CD14-positive monocyte (primary cell): ENCODE measurements at regions of chr6 and their contacts with region 1.

Region 1: GRCh38 chr6:127120787-127121636 is 2.5 kb downstream of the RSPO3 start:
- DNase-seq: peak; percentile 58 to 77 (median 64)
- H3K4me3 ChIP-seq: no peak overlapping the region
- H3K4me3 Mint-ChIP-seq: peak overlapping the region in 1 of 2 donors; percentile 80
- H3K27ac ChIP-seq: no peak overlapping the region
- H3K27ac Mint-ChIP-seq: peak overlapping the region in 2 of 7 donors; percentile 55 to 68
- H3K4me1 ChIP-seq: peaks cover 23% of the 10 kb centered on the region in 2 donors
- H3K4me1 Mint-ChIP-seq: peaks cover 26% of the 10 kb centered on the region
- H3K27me3 ChIP-seq: peaks cover 63 to 84% of the 10 kb centered on the region in 2 donors
- H3K27me3 Mint-ChIP-seq: peaks cover 63 to 79% (median 71%) of the 10 kb centered on the region in 3 donors
- CTCF ChIP-seq: peak; percentile 77

Region 2: DNA sequence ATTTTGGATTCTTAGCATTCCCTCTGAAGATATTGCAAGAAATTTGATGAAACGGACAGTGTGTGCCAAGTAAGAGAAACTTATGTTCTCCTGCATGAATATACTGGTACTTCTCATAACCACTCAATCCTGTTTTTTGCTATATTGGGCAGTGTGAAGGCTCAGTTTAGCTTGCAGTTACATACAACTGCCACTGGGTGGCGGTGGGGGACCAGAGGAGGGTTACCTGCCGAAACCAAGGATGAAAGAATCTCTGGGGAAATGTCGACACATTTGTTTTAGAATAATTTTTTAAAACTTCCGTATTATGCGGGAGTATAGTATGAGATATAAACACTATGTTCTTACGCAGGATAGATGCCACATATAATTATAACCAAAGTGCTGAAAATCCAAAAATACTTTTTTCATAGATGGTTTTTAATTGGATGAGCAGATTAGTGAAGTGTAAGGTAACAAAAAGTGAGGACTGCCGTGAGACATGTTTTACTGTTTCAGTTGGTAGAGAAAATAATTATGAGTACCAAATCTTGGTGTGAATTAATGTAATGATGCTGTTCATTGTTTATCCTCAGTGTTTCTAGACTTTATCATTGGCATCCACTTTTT is 1124.9 kb before region 1 on chr6:
- intact Hi-C with region 1: loop called in 1 of 2 experiments (anchors 10 kb)
- DNase-seq: peak; percentile 38 to 63 (median 62)
- H3K4me3 ChIP-seq: no peak overlapping the region
- H3K4me3 Mint-ChIP-seq: no peak overlapping the region
- H3K27ac ChIP-seq: no peak overlapping the region
- H3K27ac Mint-ChIP-seq: no peak overlapping the region
- H3K4me1 ChIP-seq: peaks cover 0 to 3% of the 10 kb centered on the region in 2 donors
- H3K4me1 Mint-ChIP-seq: peaks cover 6% of the 10 kb centered on the region
- H3K27me3 ChIP-seq: no peaks in the 10 kb centered on the region
- H3K27me3 Mint-ChIP-seq: peaks cover 0 to 2% (median 2%) of the 10 kb centered on the region in 3 donors
- CTCF ChIP-seq: peak; percentile 98

Region 3: GRCh38 chr6:126804332-126805064 is 316.5 kb before region 1 on chr6:
- intact Hi-C with region 1: loop called in 1 of 2 experiments (anchors 10 kb)
- DNase-seq: peak in 1 of 3 donors; percentile 4
- H3K4me3 ChIP-seq: no peak overlapping the region
- H3K4me3 Mint-ChIP-seq: no peak overlapping the region
- H3K27ac ChIP-seq: no peak overlapping the region
- H3K27ac Mint-ChIP-seq: no peak overlapping the region
- H3K4me1 ChIP-seq: no peaks in the 10 kb centered on the region
- H3K4me1 Mint-ChIP-seq: no peaks in the 10 kb centered on the region
- H3K27me3 ChIP-seq: no peaks in the 10 kb centered on the region
- H3K27me3 Mint-ChIP-seq: peaks cover 0 to 6% (median 4%) of the 10 kb centered on the region in 3 donors
- CTCF ChIP-seq: peak; percentile 63

Region 4: DNA sequence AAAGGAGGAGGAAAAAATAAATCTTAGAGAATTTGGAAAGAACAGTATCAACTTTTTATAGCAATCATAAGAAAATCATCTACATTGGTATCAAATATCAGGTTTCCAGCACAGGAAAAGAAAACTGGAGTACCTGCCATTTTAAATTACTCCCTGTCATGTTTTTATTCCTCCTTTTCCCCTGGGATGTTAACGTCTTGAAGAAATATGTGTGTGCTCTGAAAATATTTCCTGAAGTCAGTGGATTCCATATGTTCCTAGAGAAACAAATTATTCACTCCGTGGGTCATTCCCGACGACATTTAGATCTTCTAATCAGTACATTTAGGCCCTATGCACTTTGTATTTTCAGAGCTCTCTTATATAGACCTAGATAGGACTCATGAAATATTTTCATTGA is 44.5 kb before region 1 on chr6:
- intact Hi-C with region 1: no loop called
- DNase-seq: no peak
- H3K4me3 ChIP-seq: no peak overlapping the region
- H3K4me3 Mint-ChIP-seq: no peak overlapping the region
- H3K27ac ChIP-seq: no peak overlapping the region
- H3K27ac Mint-ChIP-seq: no peak overlapping the region
- H3K4me1 ChIP-seq: no peaks in the 10 kb centered on the region
- H3K4me1 Mint-ChIP-seq: no peaks in the 10 kb centered on the region
- H3K27me3 ChIP-seq: no peaks in the 10 kb centered on the region
- H3K27me3 Mint-ChIP-seq: peaks cover 0 to 5% (median 2%) of the 10 kb centered on the region in 3 donors
- CTCF ChIP-seq: no peak

Region 5: DNA sequence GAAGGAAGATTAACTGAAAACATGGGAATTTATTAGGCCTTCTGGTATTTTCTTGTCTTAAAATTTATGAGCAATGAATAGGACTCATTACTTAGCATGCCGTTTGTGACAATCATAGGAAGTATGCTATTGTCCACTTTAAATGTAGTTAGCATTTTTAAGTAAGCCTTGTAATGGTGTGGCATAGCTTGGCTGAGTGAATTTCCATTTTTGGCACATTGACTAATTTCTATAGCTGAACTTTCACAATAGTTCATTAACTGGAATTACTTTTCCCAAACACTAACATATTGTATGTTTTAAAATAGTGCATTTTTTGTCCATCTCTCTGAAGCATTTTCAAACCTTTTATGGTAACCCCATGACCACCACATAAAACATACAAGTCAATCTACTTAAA is 13.1 kb after region 1 on chr6:
- intact Hi-C with region 1: no loop called
- DNase-seq: no peak
- H3K4me3 ChIP-seq: no peak overlapping the region
- H3K4me3 Mint-ChIP-seq: no peak overlapping the region
- H3K27ac ChIP-seq: no peak overlapping the region
- H3K27ac Mint-ChIP-seq: no peak overlapping the region
- H3K4me1 ChIP-seq: no peaks in the 10 kb centered on the region
- H3K4me1 Mint-ChIP-seq: no peaks in the 10 kb centered on the region
- H3K27me3 ChIP-seq: peaks cover 4 to 11% of the 10 kb centered on the region in 2 donors
- H3K27me3 Mint-ChIP-seq: peaks cover 6 to 13% (median 7%) of the 10 kb centered on the region in 3 donors
- CTCF ChIP-seq: no peak

Region 6: GRCh38 chr6:128403618-128404444 is 1282.8 kb after region 1 on chr6:
- intact Hi-C with region 1: no loop called
- DNase-seq: no peak
- H3K4me3 ChIP-seq: no peak overlapping the region
- H3K4me3 Mint-ChIP-seq: no peak overlapping the region
- H3K27ac ChIP-seq: no peak overlapping the region
- H3K27ac Mint-ChIP-seq: no peak overlapping the region
- H3K4me1 ChIP-seq: no peaks in the 10 kb centered on the region
- H3K4me1 Mint-ChIP-seq: no peaks in the 10 kb centered on the region
- H3K27me3 ChIP-seq: no peaks in the 10 kb centered on the region
- H3K27me3 Mint-ChIP-seq: peaks cover 0 to 2% (median 0%) of the 10 kb centered on the region in 3 donors
- CTCF ChIP-seq: no peak

Region 7: GRCh38 chr6:129105035-129105434 is 1984.0 kb after region 1 on chr6:
- intact Hi-C with region 1: no loop called
- DNase-seq: no peak
- H3K4me3 ChIP-seq: no peak overlapping the region
- H3K4me3 Mint-ChIP-seq: no peak overlapping the region
- H3K27ac ChIP-seq: no peak overlapping the region
- H3K27ac Mint-ChIP-seq: no peak overlapping the region
- H3K4me1 ChIP-seq: no peaks in the 10 kb centered on the region
- H3K4me1 Mint-ChIP-seq: no peaks in the 10 kb centered on the region
- H3K27me3 ChIP-seq: no peaks in the 10 kb centered on the region
- H3K27me3 Mint-ChIP-seq: peaks cover 0 to 2% (median 0%) of the 10 kb centered on the region in 3 donors
- CTCF ChIP-seq: no peak